Activated CD4-positive, alpha-beta memory T cell treated with anti-CD3 and anti-CD28 coated beads, Interleukin-2, amount 10 ng/mL, durations not matched to agents 7 days and 5 days (primary cell): ENCODE measurements at regions of chr1 and their contacts with region 1.

Region 1: GRCh38 chr1:75203415-75204277 is 69.5 kb downstream of the LHX8 start:
- DNase-seq: no peak
- H3K4me3 Mint-ChIP-seq: no peak overlapping the region
- H3K27ac Mint-ChIP-seq: no peak overlapping the region
- H3K4me1 Mint-ChIP-seq: no peaks in the 10 kb centered on the region
- H3K27me3 Mint-ChIP-seq: no peaks in the 10 kb centered on the region

Region 2: GRCh38 chr1:74771913-74772515 is 431.6 kb before region 1 on chr1:
- CTCF ChIA-PET with region 1: interaction called, 14 read pairs
- POLR2A ChIA-PET with region 1: no interaction called
- DNase-seq: no peak
- H3K4me3 Mint-ChIP-seq: no peak overlapping the region
- H3K27ac Mint-ChIP-seq: no peak overlapping the region
- H3K4me1 Mint-ChIP-seq: no peaks in the 10 kb centered on the region
- H3K27me3 Mint-ChIP-seq: peaks cover 7% of the 10 kb centered on the region

Region 3: GRCh38 chr1:75159154-75159553 is 44.5 kb before region 1 on chr1:
- CTCF ChIA-PET with region 1: no interaction called
- POLR2A ChIA-PET with region 1: no interaction called
- DNase-seq: no peak
- H3K4me3 Mint-ChIP-seq: no peak overlapping the region
- H3K27ac Mint-ChIP-seq: no peak overlapping the region
- H3K4me1 Mint-ChIP-seq: no peaks in the 10 kb centered on the region
- H3K27me3 Mint-ChIP-seq: peaks cover 2% of the 10 kb centered on the region